Prostate gland (tissue), 2 donors: ENCODE measurements at regions of chr16 and their contacts with region 1.

Region 1: GRCh38 chr16:11396241-11397048 is 51.2 kb downstream of the RMI2 start:
- DNase-seq: peak; percentile 61
- H3K4me3 ChIP-seq: no peak overlapping the region
- H3K27ac ChIP-seq: no peak overlapping the region
- H3K4me1 ChIP-seq: no peaks in the 10 kb centered on the region
- H3K27me3 ChIP-seq: no peaks in the 10 kb centered on the region
- CTCF ChIP-seq: peak; percentile 95 to 98 (median 96)
- POLR2A ChIP-seq: no peak

Region 2: GRCh38 chr16:11079652-11080187 is 316.7 kb before region 1 on chr16:
- intact Hi-C with region 1: no loop called
- DNase-seq: no peak
- H3K4me3 ChIP-seq: no peak overlapping the region
- H3K27ac ChIP-seq: peak overlapping the region; percentile 2 to 32
- H3K4me1 ChIP-seq: no peaks in the 10 kb centered on the region
- H3K27me3 ChIP-seq: no peaks in the 10 kb centered on the region
- CTCF ChIP-seq: no peak
- POLR2A ChIP-seq: no peak

Region 3: GRCh38 chr16:11535471-11535870 is 139.0 kb after region 1 on chr16:
- intact Hi-C with region 1: loop called (anchors 10 kb)
- DNase-seq: peak; percentile 57
- H3K4me3 ChIP-seq: no peak overlapping the region
- H3K27ac ChIP-seq: peak overlapping the region; percentile 36 to 39
- H3K4me1 ChIP-seq: peaks cover 5% of the 10 kb centered on the region
- H3K27me3 ChIP-seq: no peaks in the 10 kb centered on the region
- CTCF ChIP-seq: no peak
- POLR2A ChIP-seq: no peak

Region 4: GRCh38 chr16:11639925-11640899 is 243.8 kb after region 1 on chr16:
- intact Hi-C with region 1: loop called (anchors 5 kb)
- DNase-seq: peak; percentile 86
- H3K4me3 ChIP-seq: no peak overlapping the region
- H3K27ac ChIP-seq: peak overlapping the region; percentile 76 to 91
- H3K4me1 ChIP-seq: no peaks in the 10 kb centered on the region
- H3K27me3 ChIP-seq: no peaks in the 10 kb centered on the region
- CTCF ChIP-seq: no peak
- POLR2A ChIP-seq: peak; percentile 73

Region 5: DNA sequence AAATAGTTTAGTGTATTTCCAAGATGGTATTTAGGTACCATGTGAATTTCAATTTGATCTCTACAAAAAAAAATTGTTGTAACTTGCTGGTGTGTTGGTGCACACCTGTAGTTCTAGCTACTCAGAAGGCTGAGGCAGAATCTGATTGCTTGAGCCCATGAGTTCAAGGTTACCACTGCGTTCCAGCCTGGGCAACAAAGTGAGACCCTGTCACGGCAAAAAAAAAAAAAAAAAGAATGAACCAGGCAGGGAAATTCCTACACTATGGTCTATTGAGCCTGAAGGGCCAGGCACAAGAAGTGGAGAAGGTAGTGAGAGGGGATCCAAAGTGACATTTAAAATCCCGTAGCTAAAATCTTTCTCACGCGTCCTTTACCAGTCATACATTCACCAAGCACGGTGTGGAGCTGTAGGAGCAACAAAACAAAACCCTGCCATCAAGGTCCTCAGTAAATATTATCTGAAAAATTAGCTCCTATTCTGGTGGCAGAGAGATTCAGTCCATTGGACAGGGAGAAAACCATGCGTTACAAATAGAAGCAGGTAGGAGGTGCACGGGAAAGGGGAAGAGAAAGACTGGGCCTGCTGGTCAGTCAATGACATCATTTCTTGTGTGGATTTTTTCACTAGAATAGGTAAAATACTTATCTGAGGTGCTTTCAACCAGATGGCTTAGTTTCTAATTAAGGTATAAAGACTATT is 319.0 kb after region 1 on chr16:
- intact Hi-C with region 1: loop called (anchors 2 kb)
- DNase-seq: no peak
- H3K4me3 ChIP-seq: no peak overlapping the region
- H3K27ac ChIP-seq: peak overlapping the region in 1 of 2 donors; percentile 44
- H3K4me1 ChIP-seq: no peaks in the 10 kb centered on the region
- H3K27me3 ChIP-seq: no peaks in the 10 kb centered on the region
- CTCF ChIP-seq: peak in 1 of 4 experiments; percentile 7
- POLR2A ChIP-seq: no peak

Region 6: GRCh38 chr16:11819798-11820197 is 423.4 kb after region 1 on chr16:
- intact Hi-C with region 1: loop called (anchors 10 kb)
- DNase-seq: no peak
- H3K4me3 ChIP-seq: no peak overlapping the region
- H3K27ac ChIP-seq: no peak overlapping the region
- H3K4me1 ChIP-seq: no peaks in the 10 kb centered on the region
- H3K27me3 ChIP-seq: no peaks in the 10 kb centered on the region
- CTCF ChIP-seq: no peak
- POLR2A ChIP-seq: no peak

Region 7: DNA sequence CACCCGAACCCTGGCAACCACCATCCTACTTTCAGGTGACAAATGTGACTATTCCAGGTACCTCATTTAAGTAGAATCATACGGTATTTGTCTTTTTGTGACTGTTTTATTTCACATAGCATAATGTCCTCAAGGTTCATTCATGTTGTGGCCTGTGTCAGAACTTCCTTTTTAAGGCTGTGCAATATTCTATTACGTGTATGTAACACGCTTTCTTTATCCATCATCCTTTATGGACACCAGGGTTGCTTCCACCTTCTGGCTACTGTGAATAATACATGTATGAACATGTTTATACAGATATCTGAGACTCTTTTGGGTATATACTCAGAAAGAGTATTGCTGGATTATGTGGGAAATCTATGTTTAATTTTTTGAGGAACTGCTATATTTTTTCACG is 483.6 kb after region 1 on chr16:
- intact Hi-C with region 1: no loop called
- DNase-seq: no peak
- H3K4me3 ChIP-seq: no peak overlapping the region
- H3K27ac ChIP-seq: no peak overlapping the region
- H3K4me1 ChIP-seq: no peaks in the 10 kb centered on the region
- H3K27me3 ChIP-seq: no peaks in the 10 kb centered on the region
- CTCF ChIP-seq: no peak
- POLR2A ChIP-seq: no peak

Region 8: DNA sequence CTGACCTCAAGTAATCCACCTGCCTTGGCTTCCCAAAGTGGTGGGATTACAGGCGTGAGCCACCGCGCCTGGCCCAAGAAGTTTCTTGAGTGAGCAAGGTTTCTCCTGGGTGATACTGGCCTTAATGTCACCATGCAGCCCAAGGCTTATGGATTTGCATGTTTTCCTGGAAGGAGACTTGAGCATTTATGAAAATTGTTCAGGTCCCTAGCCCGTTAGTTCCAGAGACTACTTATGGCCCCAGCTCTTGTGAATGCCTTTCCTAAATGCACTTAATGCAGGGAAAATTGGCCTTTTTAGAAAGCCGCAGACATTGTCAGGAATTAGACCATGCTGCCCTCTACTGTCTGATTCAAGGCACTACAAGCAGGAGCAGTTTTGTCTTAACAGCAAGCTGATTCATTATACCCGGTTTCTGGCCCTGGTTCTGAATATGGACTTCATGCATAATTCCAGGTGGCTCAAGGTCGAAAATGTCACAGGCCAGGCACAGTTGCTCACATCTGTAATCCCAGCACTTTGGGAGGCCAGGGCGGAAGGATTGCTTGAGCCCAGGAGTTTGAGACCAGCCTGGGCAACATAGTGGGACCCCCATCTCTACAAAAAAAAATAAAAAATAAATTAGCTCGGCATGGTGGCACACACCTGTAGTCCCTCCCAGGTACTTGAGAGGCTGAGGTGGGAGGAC is 671.4 kb after region 1 on chr16:
- intact Hi-C with region 1: loop called (anchors 10 kb)
- DNase-seq: peak; percentile 44
- H3K4me3 ChIP-seq: no peak overlapping the region
- H3K27ac ChIP-seq: no peak overlapping the region
- H3K4me1 ChIP-seq: no peaks in the 10 kb centered on the region
- H3K27me3 ChIP-seq: no peaks in the 10 kb centered on the region
- CTCF ChIP-seq: peak; percentile 82 to 92 (median 87)
- POLR2A ChIP-seq: no peak